ENCODE measurements at regions of chr20 and their contacts with region 1.

Region 1: GRCh38 chr20:11935212-11936154 is 17.8 kb downstream of the BTBD3 start:
- DNase-seq: no peak
- H3K4me3 ChIP-seq: no peak overlapping the region
- H3K27ac ChIP-seq: no peak overlapping the region
- H3K4me1 ChIP-seq: peaks cover 0 to 2% (median 0%) of the 10 kb centered on the region in 4 donors
- H3K27me3 ChIP-seq: no peaks in the 10 kb centered on the region
- CTCF ChIP-seq: no peak
- EP300 ChIP-seq: no peak
- POLR2A ChIP-seq: no peak

Region 2: GRCh38 chr20:12047838-12048432 is 112.5 kb after region 1 on chr20:
- in situ Hi-C with region 1: loop called in 1 of 4 experiments (anchors 25 kb)
- intact Hi-C with region 1: no loop called
- DNase-seq: no peak
- H3K4me3 ChIP-seq: no peak overlapping the region
- H3K27ac ChIP-seq: no peak overlapping the region
- H3K4me1 ChIP-seq: no peaks in the 10 kb centered on the region
- H3K27me3 ChIP-seq: no peaks in the 10 kb centered on the region
- CTCF ChIP-seq: no peak
- EP300 ChIP-seq: no peak
- POLR2A ChIP-seq: no peak